ENCODE measurements at regions of chr1 and their contacts with region 1.

Region 1: DNA sequence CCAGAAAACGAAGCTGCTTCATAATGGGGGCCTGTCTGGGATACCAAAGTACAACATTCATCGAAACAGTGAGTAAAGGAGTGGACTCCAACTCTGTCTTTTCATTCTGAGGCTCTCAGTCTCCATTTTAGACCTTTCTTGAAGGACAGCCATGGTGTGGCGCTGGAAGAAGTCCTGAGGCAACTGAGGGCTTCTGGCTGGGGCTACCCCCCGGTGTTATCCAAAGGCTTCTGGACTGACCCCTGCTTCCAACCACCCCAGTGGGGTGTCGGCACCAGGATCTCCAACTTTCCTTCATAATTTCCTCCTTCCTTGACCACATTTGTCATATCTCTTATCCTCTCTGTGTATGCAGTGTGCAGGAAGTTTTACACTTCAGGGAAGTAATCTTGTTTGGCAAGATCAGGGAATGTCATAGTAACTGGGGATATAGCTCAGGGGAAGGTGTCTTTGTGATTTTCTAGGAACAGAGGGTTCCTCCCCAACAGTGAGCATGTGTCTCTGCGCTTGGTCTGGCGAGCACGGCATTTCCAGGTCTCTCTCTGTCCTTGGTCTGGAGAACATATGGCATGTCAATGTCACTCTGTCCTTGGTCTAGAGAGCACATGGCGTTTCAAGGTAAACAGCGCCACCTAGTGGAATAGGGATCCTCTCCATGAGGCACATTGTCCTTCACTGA is 19.4 kb upstream of the BSDC1 start:
- DNase-seq: peak; percentile 28
- ATAC-seq: peak; percentile 88
- H3K4me3 Mint-ChIP-seq: no peak overlapping the region
- H3K27ac Mint-ChIP-seq: no peak overlapping the region
- H3K4me1 Mint-ChIP-seq: peaks cover 3% of the 10 kb centered on the region
- H3K27me3 Mint-ChIP-seq: peaks cover 15% of the 10 kb centered on the region
- CTCF ChIP-seq: no peak

Region 2: GRCh38 chr1:31663622-31664452 is 749.8 kb before region 1 on chr1:
- CTCF ChIA-PET with region 1: no interaction called
- POLR2A ChIA-PET with region 1: no interaction called
- intact Hi-C with region 1: loop called (anchors 1 kb)
- DNase-seq: peak; percentile 63
- ATAC-seq: peak; percentile 81
- H3K4me3 Mint-ChIP-seq: no peak overlapping the region
- H3K27ac Mint-ChIP-seq: peak overlapping the region; percentile 46
- H3K4me1 Mint-ChIP-seq: no peaks in the 10 kb centered on the region
- H3K27me3 Mint-ChIP-seq: peaks cover 9% of the 10 kb centered on the region
- CTCF ChIP-seq: peak; percentile 31

Region 3: DNA sequence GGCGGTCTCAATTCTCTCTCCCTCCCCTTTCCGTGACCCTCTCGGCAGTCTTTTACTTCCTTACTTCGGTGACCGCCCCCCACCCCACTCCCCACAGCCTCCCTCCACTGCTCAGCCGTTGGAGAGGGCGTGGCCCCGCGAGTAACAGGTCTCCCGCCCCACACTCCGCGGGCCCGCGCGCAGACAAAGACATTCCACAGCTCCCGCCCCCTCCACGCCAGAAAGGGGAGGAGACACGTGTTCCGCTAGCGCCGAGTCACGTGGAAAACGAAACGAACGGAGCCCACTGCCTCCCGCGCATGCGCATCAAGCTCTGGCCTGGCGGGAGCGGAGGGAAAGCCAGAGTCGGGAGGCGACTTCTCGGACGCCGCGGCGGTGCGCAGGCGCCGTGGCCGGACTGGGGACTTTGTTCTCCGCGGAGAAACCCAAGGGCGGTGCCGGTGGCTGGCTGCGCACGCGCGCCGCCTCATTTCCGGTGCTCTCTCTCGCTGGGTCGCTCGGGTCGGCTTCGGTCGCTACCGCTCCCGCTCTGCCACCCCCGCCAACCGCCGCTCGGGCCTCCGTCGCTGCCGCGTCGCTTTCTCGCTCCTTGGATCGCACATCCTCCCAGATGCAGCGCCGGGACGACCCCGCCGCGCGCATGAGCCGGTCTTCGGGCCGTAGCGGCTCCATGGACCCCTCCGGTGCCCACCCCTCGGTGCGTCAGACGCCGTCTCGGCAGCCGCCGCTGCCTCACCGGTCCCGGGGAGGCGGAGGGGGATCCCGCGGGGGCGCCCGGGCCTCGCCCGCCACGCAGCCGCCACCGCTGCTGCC is 400.1 kb before region 1 on chr1 and contains the start of gene KHDRBS1:
- CTCF ChIA-PET with region 1: no interaction called
- POLR2A ChIA-PET with region 1: interaction called, 13 read pairs
- intact Hi-C with region 1: no loop called
- DNase-seq: peak; percentile 97
- ATAC-seq: peak; percentile 85
- H3K4me3 Mint-ChIP-seq: peak within 1 kb of the TSS; percentile 98
- H3K27ac Mint-ChIP-seq: peak within 1 kb of the TSS; percentile 91
- H3K4me1 Mint-ChIP-seq: peaks cover 39% of the 10 kb centered on the region
- H3K27me3 Mint-ChIP-seq: no peaks in the 10 kb centered on the region
- CTCF ChIP-seq: no peak
- total RNA-seq, gene KHDRBS1: 146 and 152 TPM in 2 replicates

Region 4: GRCh38 chr1:32063261-32063681 is 350.4 kb before region 1 on chr1:
- CTCF ChIA-PET with region 1: no interaction called
- POLR2A ChIA-PET with region 1: no interaction called
- intact Hi-C with region 1: loop called (anchors 5 kb)
- DNase-seq: no peak
- ATAC-seq: peak; percentile 75
- H3K4me3 Mint-ChIP-seq: no peak overlapping the region
- H3K27ac Mint-ChIP-seq: no peak overlapping the region
- H3K4me1 Mint-ChIP-seq: peaks cover 9% of the 10 kb centered on the region
- H3K27me3 Mint-ChIP-seq: no peaks in the 10 kb centered on the region
- CTCF ChIP-seq: no peak

Region 5: DNA sequence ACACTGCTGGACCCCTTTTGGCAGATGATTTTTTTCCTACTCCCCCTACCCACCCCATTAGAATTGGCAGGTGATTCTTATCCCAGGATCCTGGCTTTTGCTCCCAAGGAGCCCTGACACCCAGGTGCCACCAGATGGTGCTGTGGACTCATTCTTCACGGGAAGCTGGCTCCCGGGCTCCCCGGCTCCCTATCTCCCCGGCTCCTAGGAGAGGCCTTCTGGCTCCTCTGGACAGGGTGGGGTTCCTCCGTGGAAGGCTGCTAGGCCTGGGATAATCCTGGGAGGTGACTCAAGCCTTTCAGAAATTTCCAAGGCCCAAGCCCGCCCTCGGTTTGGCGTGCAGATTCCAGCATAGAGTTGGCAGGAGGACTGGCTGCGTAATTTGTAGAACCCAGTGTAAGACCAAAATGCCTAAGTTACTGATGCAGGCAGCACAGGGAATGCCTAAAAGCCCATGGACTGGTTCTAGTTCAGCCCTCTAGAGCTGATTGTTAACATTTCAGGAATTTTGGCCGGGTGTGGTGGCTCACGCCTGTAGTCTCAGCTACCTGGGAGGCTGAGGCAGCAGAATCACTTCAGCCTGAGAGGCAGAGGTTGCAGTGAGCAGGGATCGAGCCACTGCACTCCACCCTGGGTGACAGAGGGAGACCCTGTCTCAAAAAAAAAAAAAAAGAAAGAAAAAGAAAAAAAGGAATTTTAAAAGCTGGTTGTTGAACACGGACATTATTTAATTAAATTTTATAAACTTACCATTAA is 12.6 kb before region 1 on chr1:
- CTCF ChIA-PET with region 1: interaction called, 7 read pairs
- POLR2A ChIA-PET with region 1: no interaction called
- intact Hi-C with region 1: loop called (anchors 2 kb)
- DNase-seq: peak; percentile 51
- ATAC-seq: peak; percentile 83
- H3K4me3 Mint-ChIP-seq: no peak overlapping the region
- H3K27ac Mint-ChIP-seq: no peak overlapping the region
- H3K4me1 Mint-ChIP-seq: peaks cover 4% of the 10 kb centered on the region
- H3K27me3 Mint-ChIP-seq: no peaks in the 10 kb centered on the region
- CTCF ChIP-seq: peak; percentile 53

Region 6: GRCh38 chr1:32806910-32807523 is 393.4 kb after region 1 on chr1:
- CTCF ChIA-PET with region 1: no interaction called
- POLR2A ChIA-PET with region 1: no interaction called
- intact Hi-C with region 1: no loop called
- DNase-seq: no peak
- ATAC-seq: no peak
- H3K4me3 Mint-ChIP-seq: no peak overlapping the region
- H3K27ac Mint-ChIP-seq: no peak overlapping the region
- H3K4me1 Mint-ChIP-seq: peaks cover 7% of the 10 kb centered on the region
- H3K27me3 Mint-ChIP-seq: no peaks in the 10 kb centered on the region
- CTCF ChIP-seq: no peak